ENCODE measurements at regions of chr3 and their contacts with region 1.

Region 1: GRCh38 chr3:112293368-112294321 is at the start of gene SLC9C1:
- DNase-seq: no peak
- H3K4me3 Mint-ChIP-seq: peak within 1 kb of the TSS; percentile 56
- H3K27ac Mint-ChIP-seq: no peak within 1 kb of the TSS
- H3K4me1 Mint-ChIP-seq: peaks cover 23% of the 10 kb centered on the region
- H3K27me3 Mint-ChIP-seq: no peaks in the 10 kb centered on the region
- total RNA-seq, gene SLC9C1: not detected

Region 2: GRCh38 chr3:112136959-112137693 is 156.5 kb before region 1 on chr3:
- CTCF ChIA-PET with region 1: interaction called, 14 read pairs
- POLR2A ChIA-PET with region 1: no interaction called
- intact Hi-C with region 1: loop called (anchors 2 kb)
- DNase-seq: peak; percentile 59
- H3K4me3 Mint-ChIP-seq: no peak overlapping the region
- H3K27ac Mint-ChIP-seq: no peak overlapping the region
- H3K4me1 Mint-ChIP-seq: peaks cover 70% of the 10 kb centered on the region
- H3K27me3 Mint-ChIP-seq: no peaks in the 10 kb centered on the region

Region 3: GRCh38 chr3:112314649-112315048 is 21.0 kb after region 1 on chr3:
- CTCF ChIA-PET with region 1: interaction called, 12 read pairs
- POLR2A ChIA-PET with region 1: no interaction called
- intact Hi-C with region 1: no loop called
- DNase-seq: no peak
- H3K4me3 Mint-ChIP-seq: no peak overlapping the region
- H3K27ac Mint-ChIP-seq: no peak overlapping the region
- H3K4me1 Mint-ChIP-seq: no peaks in the 10 kb centered on the region
- H3K27me3 Mint-ChIP-seq: peaks cover 5% of the 10 kb centered on the region

Region 4: GRCh38 chr3:112327371-112327951 is 33.8 kb after region 1 on chr3:
- CTCF ChIA-PET with region 1: interaction called, 20 read pairs
- POLR2A ChIA-PET with region 1: no interaction called
- intact Hi-C with region 1: loop called (anchors 5 kb)
- DNase-seq: no peak
- H3K4me3 Mint-ChIP-seq: no peak overlapping the region
- H3K27ac Mint-ChIP-seq: no peak overlapping the region
- H3K4me1 Mint-ChIP-seq: peaks cover 5% of the 10 kb centered on the region
- H3K27me3 Mint-ChIP-seq: peaks cover 5% of the 10 kb centered on the region

Region 5: DNA sequence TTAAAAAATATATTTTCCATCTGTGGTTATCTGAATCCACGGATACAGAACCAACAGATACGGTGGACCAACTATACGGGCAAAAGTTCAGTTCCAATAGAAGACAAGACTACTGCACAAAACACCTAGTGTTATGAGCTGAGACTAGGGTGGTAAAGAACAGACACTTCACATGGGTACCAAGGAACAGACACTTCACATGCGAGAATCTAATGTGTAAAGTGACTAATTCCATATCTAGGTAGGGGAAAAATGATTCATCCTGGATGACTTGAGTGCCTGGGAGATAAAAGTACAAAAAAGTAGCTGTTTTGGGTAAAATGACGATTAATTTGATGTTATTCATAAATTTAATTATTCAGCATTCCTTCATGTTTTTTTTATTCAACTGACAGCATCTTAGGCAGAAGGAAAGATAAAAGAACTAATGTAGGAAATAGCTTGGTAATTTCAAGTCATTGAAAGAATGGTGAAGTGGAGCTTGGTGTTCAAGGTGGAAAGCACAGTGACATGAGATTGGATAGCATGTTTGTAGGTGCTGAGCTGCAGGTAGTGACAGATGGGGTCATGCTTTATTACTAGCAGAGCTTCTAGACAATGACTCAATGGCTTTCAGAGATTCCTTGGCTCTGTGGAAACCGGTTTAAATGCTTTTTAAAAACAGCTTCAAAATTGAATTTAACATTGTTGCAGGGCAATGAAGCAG is 44.5 kb after region 1 on chr3:
- CTCF ChIA-PET with region 1: interaction called, 19 read pairs
- POLR2A ChIA-PET with region 1: no interaction called
- intact Hi-C with region 1: loop called (anchors 5 kb)
- DNase-seq: no peak
- H3K4me3 Mint-ChIP-seq: peak overlapping the region; percentile 35
- H3K27ac Mint-ChIP-seq: peak overlapping the region; percentile 88
- H3K4me1 Mint-ChIP-seq: peaks cover 79% of the 10 kb centered on the region
- H3K27me3 Mint-ChIP-seq: no peaks in the 10 kb centered on the region

Region 6: GRCh38 chr3:112498914-112499711 is 205.5 kb after region 1 on chr3 and contains the start of gene BTLA:
- CTCF ChIA-PET with region 1: interaction called, 10 read pairs
- POLR2A ChIA-PET with region 1: interaction called, 3 read pairs
- intact Hi-C with region 1: no loop called
- DNase-seq: peak; percentile 59
- H3K4me3 Mint-ChIP-seq: peak within 1 kb of the TSS; percentile 99
- H3K27ac Mint-ChIP-seq: peak within 1 kb of the TSS; percentile 98
- H3K4me1 Mint-ChIP-seq: peaks cover 55% of the 10 kb centered on the region
- H3K27me3 Mint-ChIP-seq: no peaks in the 10 kb centered on the region
- total RNA-seq, gene BTLA: 17.3 to 18.7 TPM

Region 7: GRCh38 chr3:112531358-112531781 is 237.7 kb after region 1 on chr3:
- CTCF ChIA-PET with region 1: interaction called, 16 read pairs
- POLR2A ChIA-PET with region 1: no interaction called
- intact Hi-C with region 1: loop called (anchors 1 kb)
- DNase-seq: no peak
- H3K4me3 Mint-ChIP-seq: no peak overlapping the region
- H3K27ac Mint-ChIP-seq: no peak overlapping the region
- H3K4me1 Mint-ChIP-seq: peaks cover 7% of the 10 kb centered on the region
- H3K27me3 Mint-ChIP-seq: no peaks in the 10 kb centered on the region

Region 8: DNA sequence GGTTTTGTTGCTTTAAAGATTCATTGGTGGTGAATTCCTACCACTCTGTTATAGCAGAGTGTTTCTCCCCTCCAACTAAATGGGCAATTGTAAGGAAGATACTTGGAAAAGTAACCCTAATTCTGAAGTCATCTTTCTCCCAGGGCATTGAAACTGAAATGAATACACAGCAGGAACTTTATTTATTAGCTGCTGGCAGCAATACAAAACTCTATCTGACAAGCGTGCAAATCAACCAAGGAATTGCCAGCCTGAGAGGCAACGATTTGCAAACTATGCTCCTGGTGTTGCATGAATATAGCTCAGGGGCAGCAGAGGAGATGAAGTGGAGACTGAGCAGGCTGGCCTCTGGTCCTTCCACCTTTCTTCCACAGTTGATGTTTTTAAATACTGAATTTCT is 632.3 kb after region 1 on chr3:
- CTCF ChIA-PET with region 1: no interaction called
- POLR2A ChIA-PET with region 1: no interaction called
- intact Hi-C with region 1: no loop called
- DNase-seq: no peak
- H3K4me3 Mint-ChIP-seq: no peak overlapping the region
- H3K27ac Mint-ChIP-seq: no peak overlapping the region
- H3K4me1 Mint-ChIP-seq: peaks cover 30% of the 10 kb centered on the region
- H3K27me3 Mint-ChIP-seq: no peaks in the 10 kb centered on the region